ENCODE measurements at regions of chr2 and their contacts with region 1.

Region 1: GRCh38 chr2:11778923-11779757 is 32.7 kb downstream of the LPIN1 start:
- DNase-seq: peak; percentile 90
- ATAC-seq: peak; percentile 88
- H3K4me3 Mint-ChIP-seq: peak overlapping the region; percentile 64
- H3K27ac Mint-ChIP-seq: peak overlapping the region; percentile 86
- H3K4me1 Mint-ChIP-seq: peaks cover 43% of the 10 kb centered on the region
- H3K27me3 Mint-ChIP-seq: no peaks in the 10 kb centered on the region

Region 2: DNA sequence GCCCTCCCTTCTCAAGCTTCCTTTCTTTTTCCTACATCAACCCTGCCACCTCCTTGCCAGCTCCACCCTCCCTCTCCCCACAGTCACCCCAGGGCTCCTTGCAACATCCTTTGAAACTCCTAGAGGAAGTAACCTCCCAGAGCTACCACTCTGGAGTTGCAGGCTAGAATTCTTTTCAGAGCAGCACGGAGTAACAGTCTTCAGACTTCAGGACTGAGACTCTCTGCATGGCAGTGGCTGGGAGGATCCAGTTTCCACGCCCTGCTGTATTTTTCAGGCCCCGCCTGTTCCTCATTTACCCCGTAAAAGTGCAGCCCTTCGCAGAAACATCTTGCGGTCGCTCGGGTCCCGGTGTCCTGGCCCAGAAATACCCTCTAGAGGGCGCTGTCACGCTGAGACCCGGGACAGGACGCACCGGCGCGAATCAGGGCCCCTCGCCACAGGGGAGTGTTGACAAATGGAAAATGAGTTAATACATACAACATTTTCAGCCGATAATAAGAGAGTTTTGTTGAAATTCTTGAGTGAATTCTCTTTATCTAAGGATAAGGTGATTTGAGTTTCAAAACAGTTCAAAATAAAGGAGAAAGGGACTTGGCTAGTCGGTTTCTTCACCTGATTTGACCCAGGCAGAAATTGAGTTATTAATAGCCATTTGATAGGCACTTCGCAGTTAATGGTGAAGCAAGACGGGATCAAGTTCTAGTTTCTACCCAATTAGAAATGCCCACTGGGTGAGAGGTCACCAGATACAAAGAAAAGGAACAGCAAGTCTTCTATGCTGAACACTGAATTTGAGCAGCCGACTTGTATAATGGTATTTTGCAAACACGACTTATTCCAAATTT is 90.7 kb before region 1 on chr2:
- CTCF ChIA-PET with region 1: interaction called, 101 read pairs
- DNase-seq: peak; percentile 90
- ATAC-seq: peak; percentile 95
- H3K4me3 Mint-ChIP-seq: peak overlapping the region; percentile 43
- H3K27ac Mint-ChIP-seq: no peak overlapping the region
- H3K4me1 Mint-ChIP-seq: peaks cover 14% of the 10 kb centered on the region
- H3K27me3 Mint-ChIP-seq: peaks cover 19% of the 10 kb centered on the region

Region 3: DNA sequence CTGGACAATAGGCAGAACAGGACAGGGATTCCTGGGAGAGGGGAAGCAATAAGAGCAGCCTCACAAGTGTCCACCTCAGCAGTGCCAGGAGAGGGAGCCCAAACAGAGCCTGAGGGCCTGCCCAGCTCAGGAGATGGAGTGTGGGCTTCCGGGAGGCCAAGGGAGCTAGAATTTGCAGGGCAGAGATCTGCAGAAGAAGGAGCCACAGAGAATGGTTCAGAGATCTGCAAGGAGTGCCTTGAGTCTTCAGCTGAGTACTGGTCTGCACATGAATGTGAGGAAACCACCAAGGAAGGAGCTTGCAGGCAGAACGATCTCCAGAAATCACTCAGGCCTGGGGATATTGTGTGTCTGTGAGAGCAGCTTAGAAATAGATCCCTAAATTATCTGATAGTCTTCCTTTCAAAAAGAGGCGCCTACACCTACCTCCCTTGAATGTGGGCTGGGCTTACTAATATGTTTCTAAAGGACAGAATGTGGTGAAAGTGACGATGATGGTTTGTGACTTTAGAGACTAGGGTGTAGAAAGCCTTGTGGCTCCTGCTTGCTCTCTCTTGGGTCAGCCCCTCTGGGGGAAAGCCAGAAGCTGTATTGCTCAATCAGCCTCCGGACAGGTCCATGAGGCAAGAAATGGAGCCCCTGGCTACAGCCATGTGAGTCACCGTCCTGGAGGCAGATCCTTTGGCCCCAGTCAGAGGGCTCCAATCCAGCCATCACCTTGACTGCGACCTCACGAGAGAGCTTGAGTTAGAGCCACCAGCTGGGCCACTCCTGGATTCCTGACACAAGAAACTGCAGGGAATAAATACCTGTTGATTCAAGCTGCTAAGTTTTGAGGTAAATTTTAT is 40.3 kb before region 1 on chr2:
- CTCF ChIA-PET with region 1: interaction called, 401 read pairs
- DNase-seq: peak; percentile 70
- ATAC-seq: peak; percentile 94
- H3K4me3 Mint-ChIP-seq: no peak overlapping the region
- H3K27ac Mint-ChIP-seq: peak overlapping the region; percentile 18
- H3K4me1 Mint-ChIP-seq: peaks cover 18% of the 10 kb centered on the region
- H3K27me3 Mint-ChIP-seq: peaks cover under 1% of the 10 kb centered on the region

Region 4: DNA sequence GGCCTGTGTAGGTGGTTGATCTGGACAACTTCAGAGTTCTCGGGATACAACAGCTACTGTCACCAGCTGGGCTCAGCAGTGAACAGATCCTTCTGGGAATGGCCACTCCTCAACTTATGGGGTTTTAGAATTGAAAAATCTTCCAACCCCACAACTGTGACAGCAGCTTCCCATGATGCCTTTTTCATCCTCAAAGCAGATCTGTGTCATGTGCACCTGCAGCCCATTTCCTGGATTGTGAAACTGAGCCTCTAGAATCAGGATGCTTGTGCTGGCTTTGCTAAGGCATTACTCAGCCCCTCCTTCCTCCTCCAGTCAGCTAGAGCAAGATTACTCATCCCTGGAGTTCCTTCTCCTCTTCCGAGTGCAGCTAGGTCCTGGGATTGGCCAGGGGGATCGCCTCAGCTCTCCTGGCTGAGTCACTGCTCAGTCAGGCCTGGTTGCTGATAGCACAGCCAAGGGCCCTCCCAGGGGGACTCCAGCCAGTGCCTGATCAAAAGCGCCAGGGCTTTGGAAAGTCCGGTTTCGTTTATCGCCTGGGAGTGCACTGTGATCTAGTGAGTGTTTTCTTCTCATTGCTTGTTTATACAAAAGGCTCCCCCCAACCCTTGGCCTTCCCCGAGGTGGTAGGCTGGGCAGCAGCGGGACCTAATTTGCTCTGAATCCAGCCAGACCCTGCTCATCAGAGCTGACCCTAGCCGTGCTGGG is 35.1 kb before region 1 on chr2:
- CTCF ChIA-PET with region 1: interaction called, 401 read pairs
- DNase-seq: peak; percentile 87
- ATAC-seq: peak; percentile 66
- H3K4me3 Mint-ChIP-seq: peak overlapping the region; percentile 36
- H3K27ac Mint-ChIP-seq: peak overlapping the region; percentile 74
- H3K4me1 Mint-ChIP-seq: peaks cover 46% of the 10 kb centered on the region
- H3K27me3 Mint-ChIP-seq: no peaks in the 10 kb centered on the region

Region 5: DNA sequence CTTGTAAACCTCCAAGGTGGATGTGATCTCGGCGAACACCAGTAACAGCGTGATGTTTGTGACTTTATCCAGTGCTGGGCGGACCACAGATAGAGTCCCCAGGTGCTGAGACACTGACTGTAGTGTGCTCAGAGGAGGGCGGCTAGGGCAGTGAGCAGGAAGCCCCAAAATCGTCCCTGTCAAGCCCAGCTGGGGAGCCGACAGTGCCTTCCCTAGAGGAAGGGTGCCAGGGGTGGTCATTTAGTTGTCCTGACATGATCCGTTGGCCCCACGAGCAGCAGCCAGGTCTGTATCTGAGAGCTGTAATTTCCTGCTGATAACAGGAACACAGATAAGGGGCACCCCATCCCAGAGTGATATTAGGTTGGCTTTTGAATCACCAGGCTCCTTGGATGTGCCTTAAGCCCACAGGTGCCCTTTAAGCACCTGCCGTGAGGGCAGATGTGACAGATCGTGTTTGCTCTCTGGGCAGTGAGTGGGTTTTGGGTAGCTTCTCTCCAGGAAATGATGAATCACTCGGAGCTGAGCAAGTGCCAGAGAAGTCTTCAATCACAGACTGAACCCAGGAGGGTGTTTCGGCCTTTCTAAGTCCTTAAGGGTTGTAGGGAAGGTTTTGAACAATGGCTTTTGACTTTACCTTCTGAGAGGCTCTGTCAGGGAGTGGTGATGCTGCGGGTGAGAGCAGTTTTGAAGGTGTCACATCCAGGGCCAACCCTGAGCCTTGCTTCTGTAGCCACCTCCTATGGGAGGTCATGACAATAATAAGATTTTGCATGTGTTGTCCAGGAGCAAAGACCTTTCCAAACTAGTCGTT is 25.0 kb before region 1 on chr2:
- CTCF ChIA-PET with region 1: interaction called, 401 read pairs
- DNase-seq: peak; percentile 83
- ATAC-seq: peak; percentile 68
- H3K4me3 Mint-ChIP-seq: peak overlapping the region; percentile 72
- H3K27ac Mint-ChIP-seq: peak overlapping the region; percentile 97
- H3K4me1 Mint-ChIP-seq: peaks cover 92% of the 10 kb centered on the region
- H3K27me3 Mint-ChIP-seq: no peaks in the 10 kb centered on the region

Measured in activated CD8-positive, alpha-beta memory T cell treated with anti-CD3 and anti-CD28 coated beads, Interleukin-2, amount 10 ng/mL, durations not matched to agents 7 days and 5 days (primary cell).